ENCODE measurements at regions of chr7 and their contacts with region 1.

Region 1: DNA sequence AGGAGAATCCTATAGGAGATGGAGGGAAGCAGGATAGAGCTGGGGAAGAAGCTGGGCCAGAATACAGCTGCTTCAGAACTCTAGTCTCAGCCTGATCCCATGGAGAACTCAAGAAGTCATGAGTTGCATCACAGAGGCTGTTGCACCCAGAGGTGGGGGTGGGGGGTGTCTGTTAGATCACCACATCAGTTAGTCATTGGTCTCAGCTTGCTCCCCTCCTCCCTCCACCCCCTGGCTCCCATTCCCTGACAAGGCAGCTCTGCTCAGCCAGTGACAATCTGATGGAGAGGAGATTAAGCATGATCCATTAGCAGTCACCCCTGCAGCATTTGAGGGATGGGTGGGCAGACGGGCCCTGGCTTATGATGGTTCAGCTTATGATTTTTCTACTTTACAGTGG is 58.4 kb upstream of the FGL2 start:
- DNase-seq: peak; percentile 16
- H3K4me3 ChIP-seq: no peak overlapping the region
- H3K27ac ChIP-seq: no peak overlapping the region
- H3K4me1 ChIP-seq: no peaks in the 10 kb centered on the region
- H3K27me3 ChIP-seq: no peaks in the 10 kb centered on the region
- CTCF ChIP-seq: no peak

Region 2: DNA sequence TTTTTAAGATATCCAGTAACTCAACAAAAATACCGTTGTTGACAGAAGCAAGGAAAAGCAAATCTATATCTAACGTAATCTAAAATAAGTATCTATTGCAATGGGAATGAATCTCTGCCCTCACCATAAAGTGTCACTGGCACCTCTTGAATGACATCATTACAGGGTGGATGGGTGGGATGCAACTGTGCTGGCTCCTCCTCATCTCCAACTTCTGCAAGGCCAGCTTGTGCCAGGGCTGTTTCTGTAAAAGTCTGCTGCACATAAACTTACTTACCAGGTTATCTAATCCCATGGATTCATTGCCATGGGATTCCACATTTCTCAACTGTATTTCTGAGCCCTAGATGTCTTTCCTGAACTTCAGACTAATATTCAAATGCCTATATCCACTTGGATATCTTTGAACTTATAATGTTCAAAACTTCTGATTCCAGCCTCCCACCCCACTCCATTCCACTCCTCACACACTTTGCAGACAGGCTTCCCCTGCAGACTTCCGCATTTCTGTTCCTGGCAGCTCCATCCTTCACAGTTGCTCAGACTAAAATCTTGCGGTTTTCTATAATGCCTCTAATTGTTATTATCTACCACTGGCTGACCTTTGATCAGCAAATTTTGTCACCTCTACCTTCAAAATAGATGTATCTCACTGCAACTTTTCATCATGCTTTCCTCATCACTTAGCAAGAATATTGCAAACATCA is 69.1 kb before region 1 on chr7:
- CTCF ChIA-PET with region 1: no interaction called
- dilution Hi-C with region 1: no loop called
- in situ Hi-C with region 1: no loop called
- intact Hi-C with region 1: no loop called
- DNase-seq: no peak
- H3K4me3 ChIP-seq: no peak overlapping the region
- H3K27ac ChIP-seq: no peak overlapping the region
- H3K4me1 ChIP-seq: no peaks in the 10 kb centered on the region
- H3K27me3 ChIP-seq: no peaks in the 10 kb centered on the region
- CTCF ChIP-seq: no peak

Region 3: GRCh38 chr7:77202481-77202976 is 55.5 kb before region 1 on chr7:
- CTCF ChIA-PET with region 1: no interaction called
- dilution Hi-C with region 1: loop called (anchors 5 kb)
- in situ Hi-C with region 1: no loop called
- intact Hi-C with region 1: no loop called
- DNase-seq: no peak
- H3K4me3 ChIP-seq: no peak overlapping the region
- H3K27ac ChIP-seq: no peak overlapping the region
- H3K4me1 ChIP-seq: peaks cover 4% of the 10 kb centered on the region
- H3K27me3 ChIP-seq: no peaks in the 10 kb centered on the region
- CTCF ChIP-seq: no peak

Region 4: GRCh38 chr7:77331938-77332695 is 74.1 kb after region 1 on chr7:
- CTCF ChIA-PET with region 1: no interaction called
- dilution Hi-C with region 1: loop called (anchors 5 kb)
- in situ Hi-C with region 1: no loop called
- intact Hi-C with region 1: no loop called
- DNase-seq: peak; percentile 80
- H3K4me3 ChIP-seq: no peak overlapping the region
- H3K27ac ChIP-seq: no peak overlapping the region
- H3K4me1 ChIP-seq: peaks cover 30% of the 10 kb centered on the region
- H3K27me3 ChIP-seq: no peaks in the 10 kb centered on the region
- CTCF ChIP-seq: peak; percentile 42 to 70

Region 5: DNA sequence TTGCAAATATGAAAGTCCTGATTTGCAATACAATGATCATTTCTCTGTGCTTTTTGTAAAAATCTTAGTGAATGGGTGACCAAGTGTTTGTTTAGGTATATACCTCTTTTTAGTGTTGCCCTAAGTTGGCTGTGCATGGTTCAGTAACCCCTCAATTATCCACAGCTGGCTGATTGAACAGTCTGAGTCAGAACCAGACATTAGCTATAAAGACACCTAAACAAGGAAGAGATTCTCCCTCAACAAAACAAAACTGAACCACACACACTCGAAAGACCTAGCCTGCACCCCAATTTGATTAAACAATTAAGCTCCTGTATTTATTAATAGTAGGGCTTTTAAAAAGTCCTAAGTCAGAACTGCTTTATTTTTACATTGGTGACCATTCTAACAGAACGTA is 441.0 kb after region 1 on chr7:
- CTCF ChIA-PET with region 1: no interaction called
- dilution Hi-C with region 1: no loop called
- in situ Hi-C with region 1: no loop called
- intact Hi-C with region 1: no loop called
- DNase-seq: peak; percentile 8
- H3K4me3 ChIP-seq: peak overlapping the region in 2 of 3 experiments; percentile 9 to 51
- H3K27ac ChIP-seq: no peak overlapping the region
- H3K4me1 ChIP-seq: no peaks in the 10 kb centered on the region
- H3K27me3 ChIP-seq: no peaks in the 10 kb centered on the region
- CTCF ChIP-seq: no peak